ENCODE measurements at regions of chr20 and their contacts with region 1.

Region 1: GRCh38 chr20:55253781-55254180 is 751.5 kb downstream of the CBLN4 start:
- DNase-seq: no peak
- H3K4me3 ChIP-seq: no peak overlapping the region
- H3K27ac ChIP-seq: no peak overlapping the region
- H3K4me1 ChIP-seq: no peaks in the 10 kb centered on the region
- CTCF ChIP-seq: no peak

Region 2: GRCh38 chr20:54661880-54662465 is 591.8 kb before region 1 on chr20:
- CTCF ChIA-PET with region 1: no interaction called
- POLR2A ChIA-PET with region 1: no interaction called
- intact Hi-C with region 1: loop called (anchors 5 kb)
- DNase-seq: no peak
- H3K4me3 ChIP-seq: no peak overlapping the region
- H3K27ac ChIP-seq: no peak overlapping the region
- H3K4me1 ChIP-seq: no peaks in the 10 kb centered on the region
- CTCF ChIP-seq: no peak

Region 3: DNA sequence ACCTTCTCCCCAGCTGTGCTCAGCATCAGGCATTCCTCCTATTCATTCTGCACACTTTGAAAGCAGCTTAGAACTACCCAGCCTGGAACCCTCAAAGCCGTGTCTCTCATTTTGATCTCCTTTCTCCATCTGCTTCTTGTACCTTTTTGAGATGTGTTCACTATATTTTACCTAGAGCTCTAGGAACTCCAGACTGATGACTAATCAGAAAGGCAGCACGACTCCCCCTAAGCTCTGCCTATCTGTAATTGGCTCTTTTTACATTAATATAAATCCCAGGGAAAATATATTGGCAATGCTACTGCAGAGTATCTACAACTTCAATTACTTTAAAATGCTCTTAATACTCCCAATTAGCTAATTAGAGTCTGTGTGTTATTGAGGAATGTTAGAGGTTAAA is 80.0 kb after region 1 on chr20:
- CTCF ChIA-PET with region 1: no interaction called
- POLR2A ChIA-PET with region 1: interaction called, 12 read pairs
- intact Hi-C with region 1: no loop called
- DNase-seq: no peak
- H3K4me3 ChIP-seq: no peak overlapping the region
- H3K27ac ChIP-seq: no peak overlapping the region
- H3K4me1 ChIP-seq: no peaks in the 10 kb centered on the region
- CTCF ChIP-seq: no peak